Activated CD4-positive, alpha-beta T cell treated with anti-CD3 and anti-CD28 coated beads, Interleukin-2, amount 10 ng/mL, durations not matched to agents 24 days and 14 days (primary cell): ENCODE measurements at regions of chr12 and their contacts with region 1.

Region 1: GRCh38 chr12:131104463-131105350 is 151.0 kb downstream of the ADGRD1 start:
- DNase-seq: peak; percentile 94
- H3K4me3 Mint-ChIP-seq: no peak overlapping the region
- H3K27ac Mint-ChIP-seq: no peak overlapping the region
- H3K4me1 Mint-ChIP-seq: peaks cover 8% of the 10 kb centered on the region
- H3K27me3 Mint-ChIP-seq: peaks cover 6% of the 10 kb centered on the region

Region 2: GRCh38 chr12:130970165-130970907 is 134.4 kb before region 1 on chr12:
- intact Hi-C with region 1: no loop called
- DNase-seq: no peak
- H3K4me3 Mint-ChIP-seq: no peak overlapping the region
- H3K27ac Mint-ChIP-seq: no peak overlapping the region
- H3K4me1 Mint-ChIP-seq: no peaks in the 10 kb centered on the region
- H3K27me3 Mint-ChIP-seq: no peaks in the 10 kb centered on the region

Region 3: DNA sequence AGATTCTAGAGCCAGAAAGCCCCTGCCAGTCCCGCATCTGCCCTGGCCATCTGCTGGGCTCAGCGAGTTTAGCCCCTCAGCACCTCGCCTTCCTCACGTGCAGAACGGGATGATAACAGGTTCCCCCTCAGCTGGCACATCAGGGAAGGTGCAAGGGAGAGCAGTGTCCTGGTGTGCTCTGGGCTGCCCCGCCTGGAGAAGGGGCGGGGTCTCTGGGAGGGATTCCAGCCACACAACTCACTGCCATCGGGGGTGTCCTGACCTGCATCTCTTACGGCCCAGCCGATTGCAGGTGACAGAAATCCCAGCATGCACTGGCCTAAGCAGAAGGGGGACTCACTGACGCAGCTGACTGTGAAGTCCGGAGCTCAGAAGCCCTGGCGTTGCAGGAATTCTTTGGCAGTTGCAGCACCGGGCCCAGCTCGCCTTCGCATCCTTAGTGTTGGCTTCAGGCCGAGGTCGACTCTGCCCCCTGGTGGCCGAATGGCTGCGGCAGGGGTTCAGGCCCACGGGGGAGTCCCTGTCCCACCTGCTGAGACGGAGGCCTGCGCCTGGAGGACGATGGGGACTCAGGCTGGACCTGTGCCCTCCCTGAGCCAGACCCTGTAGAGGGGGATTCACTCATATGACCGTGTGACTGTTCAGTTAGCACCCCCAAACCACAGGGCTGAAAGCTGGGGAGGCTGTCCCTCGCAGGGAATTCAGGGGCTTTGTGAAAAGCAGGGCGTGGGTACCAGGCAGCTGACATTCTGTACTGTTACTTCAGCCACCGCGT is 27.6 kb after region 1 on chr12:
- intact Hi-C with region 1: loop called (anchors 1 kb)
- DNase-seq: peak; percentile 88
- H3K4me3 Mint-ChIP-seq: no peak overlapping the region
- H3K27ac Mint-ChIP-seq: no peak overlapping the region
- H3K4me1 Mint-ChIP-seq: no peaks in the 10 kb centered on the region
- H3K27me3 Mint-ChIP-seq: no peaks in the 10 kb centered on the region

Region 4: GRCh38 chr12:131209082-131210070 is 104.7 kb after region 1 on chr12:
- intact Hi-C with region 1: loop called (anchors 2 kb)
- DNase-seq: no peak
- H3K4me3 Mint-ChIP-seq: no peak overlapping the region
- H3K27ac Mint-ChIP-seq: peak overlapping the region; percentile 49
- H3K4me1 Mint-ChIP-seq: peaks cover 19% of the 10 kb centered on the region
- H3K27me3 Mint-ChIP-seq: no peaks in the 10 kb centered on the region

Region 5: DNA sequence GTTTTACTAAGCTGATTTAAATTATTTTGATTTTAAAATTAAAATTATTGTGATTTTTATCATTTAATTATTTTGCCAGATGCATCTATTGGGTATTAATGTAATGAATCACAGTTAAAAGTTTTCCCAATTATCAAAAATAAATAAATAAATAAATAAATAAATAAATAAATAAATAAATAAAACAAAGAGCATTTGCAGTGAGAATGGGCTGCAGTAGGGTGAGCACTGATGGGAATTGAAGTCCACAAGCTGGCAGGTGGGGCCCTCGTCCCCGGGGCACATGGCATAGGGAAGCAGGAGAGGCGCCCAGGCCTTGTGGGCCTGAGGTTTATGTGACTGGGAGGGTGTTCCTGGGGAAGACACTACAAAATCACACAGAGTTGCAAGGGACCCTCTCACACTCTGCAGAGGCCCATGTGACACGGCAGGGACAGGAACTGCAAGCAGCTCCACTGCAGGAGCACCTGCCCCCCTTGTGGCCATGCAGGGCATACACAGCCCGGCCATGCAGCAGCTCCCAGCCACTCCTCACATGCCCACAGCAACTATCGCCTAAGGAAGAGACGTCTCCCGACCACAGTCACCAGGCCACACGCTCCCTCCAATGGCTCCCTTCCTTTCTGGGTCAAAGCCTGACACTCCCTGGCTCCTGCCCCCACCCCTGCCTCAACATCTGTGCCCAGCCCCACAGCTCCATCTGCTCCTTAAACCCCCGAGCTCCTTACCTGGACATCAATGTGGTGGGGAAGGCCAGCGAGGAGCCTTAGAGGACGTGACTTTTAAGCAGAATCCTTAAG is 349.9 kb after region 1 on chr12:
- intact Hi-C with region 1: loop called (anchors 5 kb)
- DNase-seq: no peak
- H3K4me3 Mint-ChIP-seq: no peak overlapping the region
- H3K27ac Mint-ChIP-seq: no peak overlapping the region
- H3K4me1 Mint-ChIP-seq: peaks cover 2% of the 10 kb centered on the region
- H3K27me3 Mint-ChIP-seq: peaks cover 13% of the 10 kb centered on the region

Region 6: DNA sequence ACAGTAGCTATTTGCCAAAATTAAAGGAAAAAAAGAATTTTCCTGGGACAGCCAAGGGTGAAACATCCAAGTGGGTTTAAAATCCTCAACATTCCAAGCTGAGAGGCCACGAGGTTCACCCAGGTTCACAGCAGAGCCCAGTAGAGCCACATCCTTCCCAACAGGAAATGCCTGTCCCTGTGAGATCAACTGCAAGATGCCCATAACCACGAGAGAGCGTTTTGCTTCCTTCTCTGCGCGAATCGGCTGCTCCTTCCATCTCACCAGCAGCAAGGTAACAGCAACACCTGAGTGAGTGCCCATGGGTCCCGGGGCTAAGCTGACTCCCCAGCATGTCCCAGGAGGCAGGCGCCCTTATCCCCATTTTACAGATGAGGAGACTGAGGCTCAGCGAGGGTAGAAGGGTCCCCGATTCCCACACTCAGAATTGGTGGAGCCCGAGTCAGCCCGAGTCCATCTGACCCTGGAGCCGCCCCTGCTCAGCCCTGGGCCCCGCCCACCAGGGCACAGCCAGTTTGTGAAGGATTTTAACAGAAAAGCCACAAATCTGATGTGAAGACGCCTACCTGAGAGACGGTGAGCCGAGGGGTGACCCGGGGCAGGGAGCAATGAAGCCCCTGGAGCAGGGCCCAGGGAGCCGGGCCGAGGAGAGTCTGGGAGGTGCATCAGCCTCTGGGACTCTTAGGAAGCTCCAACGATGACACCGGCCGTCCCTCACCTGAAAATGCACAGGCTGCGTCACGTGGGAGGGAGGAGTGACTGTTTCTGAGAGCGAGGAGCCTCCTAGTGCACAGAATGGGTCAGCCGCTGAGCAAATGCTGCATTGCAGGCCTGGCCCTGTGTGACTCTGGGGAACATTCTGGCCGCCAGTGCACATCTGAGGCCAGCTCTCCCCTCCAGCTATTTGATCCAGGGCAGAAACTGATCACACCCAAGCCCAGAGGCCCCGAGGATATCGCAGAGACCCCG is 369.3 kb after region 1 on chr12:
- intact Hi-C with region 1: loop called (anchors 5 kb)
- DNase-seq: no peak
- H3K4me3 Mint-ChIP-seq: peak overlapping the region; percentile 50
- H3K27ac Mint-ChIP-seq: no peak overlapping the region
- H3K4me1 Mint-ChIP-seq: peaks cover 3% of the 10 kb centered on the region
- H3K27me3 Mint-ChIP-seq: no peaks in the 10 kb centered on the region

Region 7: DNA sequence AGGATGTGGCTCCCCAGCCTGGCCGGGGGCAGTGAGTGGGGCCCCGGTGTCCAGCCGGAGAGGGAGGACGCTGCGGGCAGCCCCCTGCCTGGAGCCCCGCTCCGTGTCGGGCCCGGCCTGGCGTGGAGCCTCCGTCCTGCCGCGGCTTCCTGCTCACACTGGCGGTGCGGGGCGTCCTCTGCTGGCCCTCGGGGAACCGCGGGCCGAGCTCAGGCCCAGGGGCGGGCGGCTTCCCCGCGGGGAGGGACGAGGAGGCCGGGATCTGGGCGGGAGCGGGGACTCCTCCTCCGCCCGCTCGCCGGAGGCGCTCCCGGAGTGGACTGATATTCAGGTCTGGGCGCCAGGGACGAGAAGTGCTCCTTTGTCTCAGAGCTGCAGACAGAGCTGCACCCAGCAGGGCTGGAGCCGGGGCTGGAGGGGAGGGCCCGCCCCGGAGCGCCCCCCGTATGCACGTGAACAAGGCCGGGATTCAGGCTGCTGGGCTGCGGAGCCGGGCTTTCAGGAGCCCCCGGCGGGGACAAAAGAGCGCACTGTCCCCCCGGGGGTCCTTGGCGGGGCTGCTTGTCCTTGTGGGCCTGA is 725.7 kb after region 1 on chr12:
- intact Hi-C with region 1: loop called (anchors 1 kb)
- DNase-seq: peak; percentile 81
- H3K4me3 Mint-ChIP-seq: peak overlapping the region; percentile 62
- H3K27ac Mint-ChIP-seq: no peak overlapping the region
- H3K4me1 Mint-ChIP-seq: peaks cover 5% of the 10 kb centered on the region
- H3K27me3 Mint-ChIP-seq: peaks cover 42% of the 10 kb centered on the region